Activated naive CD4-positive, alpha-beta T cell treated with anti-CD3 and anti-CD28 coated beads for 36 hours (primary cell): ENCODE measurements at regions of chr20 and their contacts with region 1.

Region 1: GRCh38 chr20:62723351-62723750 is 14.7 kb downstream of the NTSR1 start:
- DNase-seq: no peak
- H3K4me3 Mint-ChIP-seq: no peak overlapping the region
- H3K27ac Mint-ChIP-seq: no peak overlapping the region
- H3K4me1 Mint-ChIP-seq: peaks cover 19% of the 10 kb centered on the region
- H3K27me3 Mint-ChIP-seq: peaks cover 2% of the 10 kb centered on the region

Region 2: GRCh38 chr20:62675156-62675876 is 48.0 kb before region 1 on chr20:
- CTCF ChIA-PET with region 1: no interaction called
- intact Hi-C with region 1: no loop called
- DNase-seq: no peak
- H3K4me3 Mint-ChIP-seq: no peak overlapping the region
- H3K27ac Mint-ChIP-seq: no peak overlapping the region
- H3K4me1 Mint-ChIP-seq: no peaks in the 10 kb centered on the region
- H3K27me3 Mint-ChIP-seq: no peaks in the 10 kb centered on the region

Region 3: GRCh38 chr20:62740286-62741141 is 17.2 kb after region 1 on chr20:
- CTCF ChIA-PET with region 1: interaction called, 3 read pairs
- intact Hi-C with region 1: loop called (anchors 1 kb)
- DNase-seq: peak; percentile 86
- H3K4me3 Mint-ChIP-seq: peak overlapping the region; percentile 38
- H3K27ac Mint-ChIP-seq: peak overlapping the region; percentile 47
- H3K4me1 Mint-ChIP-seq: peaks cover 28% of the 10 kb centered on the region
- H3K27me3 Mint-ChIP-seq: no peaks in the 10 kb centered on the region